ACHN (cell line): ENCODE measurements at regions of chr9 and their contacts with region 1.

Region 1: GRCh38 chr9:132268725-132269352 is 85.9 kb downstream of the SETX start:
- DNase-seq: peak; percentile 65

Region 2: GRCh38 chr9:131590908-131591844 is 677.7 kb before region 1 on chr9:
- in situ Hi-C with region 1: no loop called
- DNase-seq: peak; percentile 79

Region 3: GRCh38 chr9:131799177-131799823 is 469.5 kb before region 1 on chr9:
- in situ Hi-C with region 1: loop called (anchors 25 kb)
- DNase-seq: peak; percentile 49

Region 4: GRCh38 chr9:132474253-132474652 is 205.4 kb after region 1 on chr9:
- in situ Hi-C with region 1: no loop called
- DNase-seq: no peak

Region 5: DNA sequence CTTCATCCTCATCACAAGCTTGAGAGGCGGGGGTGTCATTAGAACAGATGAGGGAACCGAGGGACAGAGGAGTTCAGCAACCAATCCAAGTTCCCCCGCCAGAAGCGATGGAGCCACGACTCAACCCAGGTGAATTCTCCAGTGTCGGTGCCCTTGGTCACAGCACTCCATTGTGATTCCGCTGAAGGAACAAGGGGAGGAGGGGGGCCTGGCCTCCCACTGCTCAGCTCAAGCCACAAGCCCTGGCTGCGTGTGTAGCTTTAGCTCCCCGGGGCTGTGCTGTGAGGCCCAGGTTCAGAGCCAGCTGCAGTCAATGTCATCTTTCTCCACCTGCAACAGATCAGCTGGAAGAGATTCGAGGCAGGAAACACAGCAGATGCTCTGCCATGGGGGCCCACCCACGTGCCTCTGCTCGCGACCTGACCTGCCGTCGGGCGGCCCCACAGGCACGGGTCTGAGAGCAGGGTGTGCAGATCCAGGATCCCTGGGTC is 474.0 kb after region 1 on chr9:
- in situ Hi-C with region 1: no loop called
- DNase-seq: no peak